ENCODE measurements at regions of chr20 and their contacts with region 1.

Region 1: GRCh38 chr20:8131598-8132483 is at the start of gene PLCB1:
- DNase-seq: peak; percentile 79
- H3K4me3 Mint-ChIP-seq: peak within 1 kb of the TSS; percentile 75
- H3K27ac Mint-ChIP-seq: peak within 1 kb of the TSS; percentile 43
- H3K4me1 Mint-ChIP-seq: peaks cover 8% of the 10 kb centered on the region
- H3K27me3 Mint-ChIP-seq: peaks cover 15% of the 10 kb centered on the region
- CTCF ChIP-seq: peak; percentile 95
- total RNA-seq, gene PLCB1: 5.9 and 8.2 TPM in 2 replicates

Region 2: DNA sequence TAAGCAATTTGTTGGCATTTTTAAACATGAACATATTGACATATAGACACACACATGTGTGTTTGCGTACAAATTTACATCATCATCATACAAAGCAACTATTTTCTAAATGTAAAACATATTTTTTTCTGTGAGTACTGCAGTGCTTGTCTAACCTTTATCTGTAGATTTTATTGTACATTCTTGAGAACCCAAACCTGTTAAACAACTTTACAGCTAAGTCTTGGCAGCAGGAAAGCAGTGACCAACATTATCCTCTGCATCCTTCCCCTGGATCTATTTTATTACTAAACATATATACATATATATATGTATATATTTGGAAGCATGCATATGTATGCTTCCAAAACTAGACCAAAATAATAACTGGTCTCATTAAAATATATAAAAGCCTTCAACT is 10.2 kb before region 1 on chr20:
- CTCF ChIA-PET with region 1: interaction called, 11 read pairs
- POLR2A ChIA-PET with region 1: no interaction called
- intact Hi-C with region 1: no loop called
- DNase-seq: no peak
- H3K4me3 Mint-ChIP-seq: no peak overlapping the region
- H3K27ac Mint-ChIP-seq: no peak overlapping the region
- H3K4me1 Mint-ChIP-seq: no peaks in the 10 kb centered on the region
- H3K27me3 Mint-ChIP-seq: no peaks in the 10 kb centered on the region
- CTCF ChIP-seq: no peak

Region 3: DNA sequence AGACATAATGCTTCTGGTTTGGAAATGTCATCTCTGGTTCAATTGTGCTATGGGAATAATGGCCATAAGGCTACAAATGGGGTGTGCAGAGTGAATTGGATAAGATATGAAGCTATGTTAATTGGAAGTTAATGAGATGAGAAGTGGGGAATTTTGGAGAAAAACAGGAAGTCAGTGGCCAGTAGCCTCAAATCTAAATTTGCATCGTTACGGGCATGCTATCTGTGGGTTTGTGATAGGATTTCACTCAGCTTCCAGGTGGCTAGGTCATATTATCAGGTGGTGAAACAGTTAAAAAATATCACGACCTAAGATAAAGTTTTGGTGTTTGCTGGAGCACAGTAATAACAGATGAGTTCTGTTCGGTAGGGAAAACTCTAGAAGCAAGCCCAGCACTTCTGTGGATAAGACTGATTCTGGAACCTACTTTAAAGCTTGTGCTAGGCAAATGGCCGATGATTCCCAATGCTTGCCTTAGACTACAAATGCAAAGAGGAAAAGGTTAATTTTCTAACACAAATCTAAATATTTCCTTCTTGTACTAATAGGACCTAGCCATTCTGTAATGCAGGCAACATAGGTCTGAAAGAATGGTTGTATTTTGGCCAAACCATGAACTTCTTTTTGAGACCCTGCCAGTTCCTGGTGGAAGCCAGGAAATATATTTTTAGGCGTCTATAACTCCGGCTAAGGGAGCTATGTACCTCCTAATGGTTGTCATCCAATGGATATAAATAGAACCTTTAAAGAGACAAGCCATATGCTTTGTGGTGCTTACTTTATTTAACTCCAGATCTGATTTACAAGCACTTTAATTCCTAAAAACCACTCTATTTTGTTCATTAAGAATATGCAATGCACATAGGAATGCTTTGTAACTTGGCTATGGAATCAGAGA is 111.2 kb after region 1 on chr20:
- CTCF ChIA-PET with region 1: no interaction called
- POLR2A ChIA-PET with region 1: no interaction called
- intact Hi-C with region 1: no loop called
- DNase-seq: no peak
- H3K4me3 Mint-ChIP-seq: no peak overlapping the region
- H3K27ac Mint-ChIP-seq: no peak overlapping the region
- H3K4me1 Mint-ChIP-seq: peaks cover 10% of the 10 kb centered on the region
- H3K27me3 Mint-ChIP-seq: no peaks in the 10 kb centered on the region
- CTCF ChIP-seq: no peak

Region 4: GRCh38 chr20:8305449-8305978 is 173.7 kb after region 1 on chr20:
- CTCF ChIA-PET with region 1: interaction called, 4 read pairs
- POLR2A ChIA-PET with region 1: no interaction called
- intact Hi-C with region 1: loop called (anchors 1 kb)
- DNase-seq: peak; percentile 79
- H3K4me3 Mint-ChIP-seq: no peak overlapping the region
- H3K27ac Mint-ChIP-seq: no peak overlapping the region
- H3K4me1 Mint-ChIP-seq: no peaks in the 10 kb centered on the region
- H3K27me3 Mint-ChIP-seq: no peaks in the 10 kb centered on the region
- CTCF ChIP-seq: peak; percentile 54

Region 5: GRCh38 chr20:8535403-8536261 is 403.8 kb after region 1 on chr20:
- CTCF ChIA-PET with region 1: interaction called, 4 read pairs
- POLR2A ChIA-PET with region 1: no interaction called
- intact Hi-C with region 1: loop called (anchors 5 kb)
- DNase-seq: peak; percentile 38
- H3K4me3 Mint-ChIP-seq: no peak overlapping the region
- H3K27ac Mint-ChIP-seq: no peak overlapping the region
- H3K4me1 Mint-ChIP-seq: peaks cover 5% of the 10 kb centered on the region
- H3K27me3 Mint-ChIP-seq: no peaks in the 10 kb centered on the region
- CTCF ChIP-seq: peak; percentile 42